ENCODE measurements at regions of chr3 and their contacts with region 1.

Region 1: DNA sequence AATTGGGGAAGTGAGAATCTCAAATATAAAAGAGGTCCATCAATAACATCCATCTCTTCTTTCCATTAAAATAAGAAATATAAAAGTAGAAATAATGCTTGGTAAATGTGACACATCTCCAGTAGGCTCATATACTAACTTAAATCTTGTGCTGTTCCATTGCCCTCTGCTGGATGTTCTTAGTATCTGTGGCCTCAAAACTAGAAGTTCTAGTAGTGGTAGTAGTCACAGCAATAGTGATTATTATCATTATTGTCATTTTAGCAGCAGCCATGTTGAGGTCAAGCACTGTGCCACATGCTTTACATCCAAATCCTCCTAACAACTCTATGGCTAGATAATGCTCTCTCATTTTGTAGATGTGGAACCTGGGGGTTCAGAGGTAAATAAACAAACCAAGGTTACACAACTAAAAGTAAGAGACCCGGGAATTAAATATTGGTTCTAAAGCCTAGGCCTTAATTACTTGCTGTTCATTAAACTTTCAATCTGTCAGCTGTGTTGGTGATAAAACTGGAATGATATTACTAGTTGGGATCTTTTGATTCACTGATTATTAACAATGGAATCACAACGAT is 20.2 kb upstream of the BTLA start:
- DNase-seq: peak; percentile 72
- H3K4me3 ChIP-seq: no peak overlapping the region
- CTCF ChIP-seq: peak; percentile 70

Region 2: DNA sequence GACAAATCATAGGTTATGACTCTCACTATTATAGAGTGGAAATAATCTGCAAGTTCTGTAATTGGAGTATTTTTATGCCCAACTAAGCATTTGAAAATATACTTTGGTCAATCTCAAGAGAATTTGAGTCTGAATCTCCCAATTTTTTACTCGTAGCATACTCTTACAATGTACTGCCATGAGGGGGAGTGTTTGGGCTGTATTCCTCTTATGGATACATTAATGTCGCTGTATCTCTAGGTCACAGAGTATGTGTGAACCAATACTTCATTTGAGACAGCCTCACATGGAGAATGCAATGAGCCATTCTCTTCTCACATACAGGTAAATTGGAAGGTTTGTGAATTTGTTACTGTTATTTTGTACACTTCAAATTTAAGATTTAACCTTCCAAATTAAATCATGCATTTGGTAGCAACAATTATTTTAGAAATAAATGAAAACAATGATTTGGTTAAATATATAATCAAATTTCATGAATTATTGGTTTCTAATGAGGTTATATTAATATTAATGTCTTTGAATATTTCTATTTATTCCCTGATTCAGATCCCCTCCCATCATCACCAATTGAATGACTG is 192.1 kb before region 1 on chr3:
- in situ Hi-C with region 1: loop called (anchors 25 kb)
- DNase-seq: peak; percentile 50
- H3K4me3 ChIP-seq: no peak overlapping the region
- CTCF ChIP-seq: peak; percentile 60

Region 3: DNA sequence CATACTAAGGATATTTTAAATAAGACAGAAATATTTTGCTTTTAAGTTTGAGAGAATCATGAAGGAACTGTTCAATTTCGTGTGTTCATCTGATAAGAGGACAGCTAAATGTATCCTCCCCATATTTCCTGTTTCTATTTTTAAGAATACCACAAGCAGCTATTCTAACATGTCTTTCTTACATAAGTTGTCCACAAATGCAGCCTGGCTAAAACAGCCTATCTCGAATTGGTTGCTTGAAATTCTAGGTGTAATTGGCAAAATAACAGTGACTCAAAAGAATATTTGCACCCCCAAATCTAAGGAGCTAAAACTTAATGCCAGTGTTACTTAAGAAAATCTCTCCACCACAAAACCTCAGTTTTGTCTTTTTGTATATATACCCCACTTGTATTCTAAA is 55.2 kb before region 1 on chr3:
- in situ Hi-C with region 1: no loop called
- DNase-seq: no peak
- H3K4me3 ChIP-seq: no peak overlapping the region
- CTCF ChIP-seq: no peak

Region 4: DNA sequence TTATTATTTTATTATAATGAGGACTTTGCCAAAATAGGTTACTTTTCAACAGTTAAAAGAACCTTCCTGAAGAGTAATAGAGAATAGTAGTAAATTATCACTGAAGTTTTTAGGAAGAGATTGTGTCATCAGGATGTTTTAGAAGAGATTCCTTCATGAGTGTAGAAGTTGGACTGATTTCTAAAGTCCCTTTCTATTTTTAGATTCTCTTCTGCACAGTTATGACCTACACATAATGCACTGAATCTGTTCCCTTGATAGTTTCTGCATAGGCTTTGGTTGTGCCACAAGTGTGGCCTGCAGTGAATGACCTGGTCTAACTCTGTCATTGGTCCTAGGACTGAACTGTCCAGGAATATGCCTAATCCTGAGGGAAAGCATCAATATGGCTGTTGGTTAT is 66.3 kb after region 1 on chr3:
- in situ Hi-C with region 1: no loop called
- DNase-seq: no peak
- H3K4me3 ChIP-seq: no peak overlapping the region
- CTCF ChIP-seq: no peak

Region 5: DNA sequence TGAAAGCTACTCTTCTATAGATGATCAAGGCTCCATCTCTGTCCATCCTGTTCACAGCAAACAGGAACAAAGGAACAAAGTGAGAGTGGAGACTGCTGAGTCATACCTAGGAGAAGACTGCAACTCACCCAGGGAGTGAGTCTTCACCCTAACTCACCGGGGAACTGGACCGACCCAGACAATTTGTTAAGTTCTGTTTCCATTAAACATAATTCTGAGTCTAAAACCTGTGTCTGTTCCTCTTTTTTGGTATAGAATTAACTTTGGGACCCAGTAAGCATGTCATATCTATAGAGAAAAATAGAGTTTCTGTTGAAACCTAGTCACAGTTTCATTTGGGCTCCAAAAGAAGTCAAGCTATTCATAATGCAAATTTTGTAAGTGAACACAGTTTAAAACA is 99.8 kb after region 1 on chr3:
- in situ Hi-C with region 1: no loop called
- DNase-seq: no peak
- H3K4me3 ChIP-seq: no peak overlapping the region
- CTCF ChIP-seq: no peak

Measured in astrocyte of the cerebellum (primary cell).